ENCODE measurements at regions of chrX and their contacts with region 1.

Region 1: DNA sequence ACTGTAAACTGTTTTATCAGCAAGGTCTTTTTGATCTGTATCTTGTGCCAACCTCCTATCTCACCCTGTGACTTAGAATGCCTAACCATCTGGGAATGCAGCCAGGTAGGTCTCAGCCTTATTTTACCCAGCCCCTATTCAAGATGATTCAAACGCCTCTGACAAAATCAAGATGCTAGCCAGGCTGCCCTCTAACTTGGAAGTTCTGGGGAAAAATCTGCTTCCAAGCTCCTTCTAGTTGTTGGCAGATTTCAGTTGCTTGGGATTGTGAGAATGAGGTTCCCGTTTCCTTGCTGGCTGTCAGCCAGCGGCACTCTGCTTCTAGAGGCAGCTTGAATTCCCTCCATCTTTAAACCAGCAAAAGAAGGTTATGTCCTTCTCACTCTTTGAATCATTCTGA is 34.7 kb downstream of the LUZP4 start:
- DNase-seq: no peak
- ATAC-seq: no peak
- H3K4me3 Mint-ChIP-seq: no peak overlapping the region
- H3K27ac Mint-ChIP-seq: no peak overlapping the region
- H3K4me1 Mint-ChIP-seq: no peaks in the 10 kb centered on the region
- H3K27me3 Mint-ChIP-seq: no peaks in the 10 kb centered on the region

Region 2: DNA sequence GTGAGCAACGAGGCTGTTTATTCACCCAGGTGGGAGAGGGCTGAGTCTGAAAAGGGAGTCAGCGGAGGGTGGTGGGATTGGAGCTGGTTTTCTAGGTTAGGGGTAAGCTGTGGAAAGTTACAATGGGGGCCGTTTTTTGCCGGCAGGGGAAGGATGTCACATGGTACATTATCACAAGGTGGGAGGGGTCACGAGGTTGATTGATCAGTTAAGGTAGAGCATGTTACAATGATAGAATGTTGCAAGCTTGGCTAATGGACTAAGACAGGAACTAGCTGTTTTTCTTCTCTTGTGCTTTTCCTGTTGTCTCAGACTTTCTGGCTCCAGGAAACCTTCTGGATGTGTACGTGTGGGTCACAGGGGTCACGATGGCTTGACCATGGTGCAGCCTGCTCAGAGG is 1276.6 kb before region 1 on chrX:
- CTCF ChIA-PET with region 1: no interaction called
- POLR2A ChIA-PET with region 1: no interaction called
- intact Hi-C with region 1: no loop called
- DNase-seq: no peak
- ATAC-seq: no peak
- H3K4me3 Mint-ChIP-seq: no peak overlapping the region
- H3K27ac Mint-ChIP-seq: no peak overlapping the region
- H3K4me1 Mint-ChIP-seq: no peaks in the 10 kb centered on the region
- H3K27me3 Mint-ChIP-seq: no peaks in the 10 kb centered on the region

Region 3: DNA sequence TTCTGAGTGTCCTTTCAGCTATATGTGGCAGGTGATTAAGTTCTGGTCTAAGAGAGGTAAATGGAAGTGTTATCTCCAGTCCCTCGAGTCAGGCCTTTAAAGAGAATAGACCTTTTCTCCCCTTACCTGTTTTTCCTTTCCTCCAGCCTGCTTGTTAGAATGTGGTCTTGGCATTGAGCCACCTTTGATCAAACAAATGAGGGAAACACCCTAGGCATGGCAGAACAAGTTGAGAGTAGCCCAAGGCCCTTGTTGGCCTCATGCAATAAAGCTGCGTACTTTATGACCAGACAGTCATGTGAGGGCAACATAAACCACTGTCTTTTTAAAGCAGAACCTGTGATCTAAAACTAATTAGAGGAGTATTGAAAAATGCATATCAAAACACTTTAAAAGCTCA is 293.6 kb before region 1 on chrX:
- CTCF ChIA-PET with region 1: no interaction called
- POLR2A ChIA-PET with region 1: no interaction called
- intact Hi-C with region 1: no loop called
- DNase-seq: no peak
- ATAC-seq: no peak
- H3K4me3 Mint-ChIP-seq: no peak overlapping the region
- H3K27ac Mint-ChIP-seq: no peak overlapping the region
- H3K4me1 Mint-ChIP-seq: no peaks in the 10 kb centered on the region
- H3K27me3 Mint-ChIP-seq: no peaks in the 10 kb centered on the region

Region 4: DNA sequence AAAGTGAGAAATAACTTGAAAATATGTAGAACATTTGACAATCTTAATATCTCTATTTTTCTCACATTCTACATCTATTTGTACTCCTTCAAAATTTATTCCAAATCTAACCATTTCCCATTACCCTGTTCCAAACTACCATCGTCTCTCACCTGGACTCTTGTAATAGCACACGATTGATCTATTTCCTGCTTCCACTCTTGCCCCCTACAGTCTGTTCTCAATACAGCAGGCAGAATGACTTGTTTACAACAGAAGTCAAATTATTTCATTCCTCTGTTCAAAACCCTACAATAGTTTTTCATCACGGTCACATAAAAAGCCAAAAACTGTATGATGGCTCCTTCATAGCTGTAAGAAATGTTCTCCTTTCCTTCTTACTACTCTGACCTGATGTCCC is 55.8 kb before region 1 on chrX:
- CTCF ChIA-PET with region 1: no interaction called
- POLR2A ChIA-PET with region 1: no interaction called
- intact Hi-C with region 1: loop called in 1 of 2 experiments (anchors 10 kb)
- DNase-seq: no peak
- ATAC-seq: no peak
- H3K4me3 Mint-ChIP-seq: no peak overlapping the region
- H3K27ac Mint-ChIP-seq: no peak overlapping the region
- H3K4me1 Mint-ChIP-seq: no peaks in the 10 kb centered on the region
- H3K27me3 Mint-ChIP-seq: no peaks in the 10 kb centered on the region

Region 5: DNA sequence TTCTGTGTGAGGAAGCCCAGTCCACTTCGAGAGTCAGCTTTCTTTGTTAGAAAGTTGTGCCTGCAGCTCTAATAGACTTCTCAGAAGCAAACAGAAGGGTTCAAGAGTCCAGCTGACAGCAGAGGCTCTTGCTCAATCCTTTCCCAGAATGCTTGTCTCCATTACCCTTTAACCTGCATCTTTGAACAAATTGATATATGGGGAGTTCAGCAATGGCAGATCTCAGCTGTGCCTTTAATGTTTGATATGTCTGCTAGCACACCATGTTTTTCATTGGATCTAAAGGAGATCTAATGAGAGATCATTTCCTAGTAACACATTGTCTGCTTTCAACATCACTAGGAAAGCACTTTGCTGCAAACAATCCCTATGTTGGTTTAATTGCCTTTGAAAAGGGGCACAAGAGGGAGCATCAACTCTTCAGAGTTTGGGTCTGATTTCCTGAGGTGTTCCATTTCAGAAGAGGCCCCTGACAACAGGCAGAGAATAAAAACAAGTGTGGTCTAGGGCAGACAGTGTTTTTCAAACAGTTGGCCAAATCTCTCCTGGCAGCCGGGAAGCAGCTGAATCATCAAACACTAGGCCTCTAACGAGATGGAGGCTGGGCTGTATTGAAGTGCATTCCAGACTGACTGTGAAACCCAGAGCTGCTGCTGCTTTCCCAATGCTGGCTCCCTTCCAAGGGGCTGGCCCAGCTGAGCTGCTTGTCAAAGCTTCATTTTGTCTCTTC is 20.9 kb after region 1 on chrX:
- CTCF ChIA-PET with region 1: no interaction called
- POLR2A ChIA-PET with region 1: no interaction called
- intact Hi-C with region 1: no loop called
- DNase-seq: no peak
- ATAC-seq: no peak
- H3K4me3 Mint-ChIP-seq: no peak overlapping the region
- H3K27ac Mint-ChIP-seq: no peak overlapping the region
- H3K4me1 Mint-ChIP-seq: no peaks in the 10 kb centered on the region
- H3K27me3 Mint-ChIP-seq: no peaks in the 10 kb centered on the region

Region 6: DNA sequence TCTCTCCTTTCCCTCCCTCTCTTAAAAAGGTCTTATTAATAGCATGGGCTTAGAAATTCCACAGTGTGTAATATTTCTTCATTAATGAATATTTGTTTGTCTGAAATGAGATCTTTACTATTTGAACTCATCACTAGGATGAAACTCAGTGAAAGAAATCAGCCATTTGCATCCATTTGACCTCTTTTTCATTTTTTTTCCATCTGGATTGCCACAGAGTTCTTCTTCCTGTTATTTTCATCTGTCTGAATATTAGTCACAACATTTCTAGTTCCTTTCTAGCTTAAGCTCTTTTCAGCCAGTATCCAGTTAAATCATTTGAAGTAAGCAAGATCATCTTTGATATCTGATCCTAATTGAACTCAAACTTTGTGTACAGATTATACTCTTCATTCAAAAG is 167.6 kb after region 1 on chrX:
- CTCF ChIA-PET with region 1: no interaction called
- POLR2A ChIA-PET with region 1: no interaction called
- intact Hi-C with region 1: no loop called
- DNase-seq: no peak
- ATAC-seq: no peak
- H3K4me3 Mint-ChIP-seq: no peak overlapping the region
- H3K27ac Mint-ChIP-seq: no peak overlapping the region
- H3K4me1 Mint-ChIP-seq: no peaks in the 10 kb centered on the region
- H3K27me3 Mint-ChIP-seq: no peaks in the 10 kb centered on the region